ENCODE measurements at regions of chr18 and their contacts with region 1.

Region 1: DNA sequence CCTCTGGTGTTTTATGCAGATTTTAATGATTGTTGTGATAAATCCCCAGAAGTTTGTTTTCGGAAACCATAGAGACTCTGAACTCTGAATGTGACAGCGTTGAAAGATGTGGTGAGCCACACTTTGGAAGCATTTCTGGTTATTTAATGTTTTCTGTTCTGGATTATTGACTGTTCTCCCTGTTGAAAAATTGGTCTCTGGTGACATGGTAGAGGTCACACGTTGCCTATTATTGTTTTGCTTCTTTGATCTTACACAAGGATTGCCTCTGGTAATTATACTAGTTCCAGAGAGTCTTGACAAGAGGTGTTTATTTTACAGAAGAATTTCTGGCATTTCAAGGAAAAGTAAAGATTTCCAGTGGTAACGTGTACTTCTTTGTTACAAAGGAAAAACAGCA is 127.1 kb downstream of the GREB1L start:
- DNase-seq: no peak
- H3K4me3 ChIP-seq: no peak overlapping the region
- H3K27ac ChIP-seq: peak overlapping the region; percentile 34 to 62 (median 37)
- H3K4me1 ChIP-seq: peaks cover 16 to 22% of the 10 kb centered on the region in 2 donors
- H3K27me3 ChIP-seq: no peaks in the 10 kb centered on the region
- CTCF ChIP-seq: no peak
- POLR2A ChIP-seq: no peak

Region 2: GRCh38 chr18:21242141-21242779 is 126.9 kb before region 1 on chr18 and contains the start of gene GREB1L:
- intact Hi-C with region 1: loop called (anchors 10 kb)
- DNase-seq: peak; percentile 81 to 87
- H3K4me3 ChIP-seq: peak within 1 kb of the TSS; percentile 53 to 79 (median 71)
- H3K27ac ChIP-seq: peak within 1 kb of the TSS; percentile 61 to 88 (median 80)
- H3K4me1 ChIP-seq: peaks cover 5 to 7% of the 10 kb centered on the region in 2 donors
- H3K27me3 ChIP-seq: no peaks in the 10 kb centered on the region
- CTCF ChIP-seq: peak in 4 of 6 experiments; percentile 28 to 71 (median 48)
- POLR2A ChIP-seq: peak in 1 of 2 donors; percentile 69
- total RNA-seq, gene GREB1L: 25.0 to 43.5 (median 31.8) TPM

Measured in thyroid gland (tissue), 4 donors.